AG04449 (cell line): ENCODE measurements at regions of chr18 and their contacts with region 1.

Region 1: GRCh38 chr18:48445540-48445939 is 36.4 kb upstream of the ZBTB7C start:
- DNase-seq: no peak
- H3K4me3 ChIP-seq: no peak overlapping the region
- CTCF ChIP-seq: peak; percentile 95

Region 2: DNA sequence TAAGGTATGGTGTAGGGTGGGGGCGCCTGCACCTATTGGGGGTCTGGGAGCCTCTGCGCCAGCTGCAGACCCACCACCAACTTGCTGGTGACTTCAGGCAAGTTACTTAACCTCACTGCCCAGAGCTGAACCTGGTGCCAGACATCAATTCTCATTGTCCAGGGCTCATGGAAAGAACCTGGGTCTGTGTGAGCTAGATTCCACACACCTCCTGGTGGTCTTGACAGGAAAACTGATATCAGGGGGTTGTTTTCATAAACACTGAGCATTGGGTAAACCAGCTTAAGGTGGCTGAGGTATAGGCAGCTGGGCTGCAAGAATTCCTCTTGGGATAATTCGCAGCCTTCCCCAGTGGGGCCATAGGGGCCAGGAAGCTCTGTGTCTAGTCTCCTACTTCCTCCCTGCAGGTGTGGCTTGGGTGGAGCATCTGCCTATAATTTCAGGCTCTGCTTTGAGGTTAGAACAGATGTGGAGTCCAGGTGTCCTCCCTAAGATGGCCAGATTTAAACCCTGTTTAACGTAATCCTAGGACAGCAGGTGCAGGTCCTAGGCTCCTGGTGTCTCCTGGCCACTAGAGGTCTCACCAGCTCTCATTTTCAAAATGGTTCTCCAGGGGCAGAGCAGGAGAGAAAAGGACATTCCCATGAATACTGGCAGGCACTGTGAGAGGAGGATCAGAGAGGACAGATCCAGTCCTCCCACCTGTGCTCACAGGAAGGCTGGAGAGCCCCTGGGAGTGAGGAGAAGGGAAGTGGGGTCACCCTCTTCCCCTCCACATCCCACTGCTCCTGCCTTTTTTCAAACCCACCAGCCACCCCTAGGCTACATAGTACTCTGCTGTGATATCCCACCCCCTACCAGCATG is 414.7 kb before region 1 on chr18:
- CTCF ChIA-PET with region 1: interaction called, 81 read pairs
- POLR2A ChIA-PET with region 1: no interaction called
- DNase-seq: no peak
- H3K4me3 ChIP-seq: no peak overlapping the region
- CTCF ChIP-seq: peak; percentile 74

Region 3: GRCh38 chr18:48230467-48231113 is 214.9 kb before region 1 on chr18:
- CTCF ChIA-PET with region 1: interaction called, 78 read pairs
- POLR2A ChIA-PET with region 1: no interaction called
- DNase-seq: no peak
- H3K4me3 ChIP-seq: no peak overlapping the region
- CTCF ChIP-seq: peak; percentile 60

Region 4: GRCh38 chr18:48419277-48420022 is 26.1 kb before region 1 on chr18:
- CTCF ChIA-PET with region 1: interaction called, 12 read pairs
- POLR2A ChIA-PET with region 1: no interaction called
- DNase-seq: no peak
- H3K4me3 ChIP-seq: no peak overlapping the region
- CTCF ChIP-seq: no peak

Region 5: DNA sequence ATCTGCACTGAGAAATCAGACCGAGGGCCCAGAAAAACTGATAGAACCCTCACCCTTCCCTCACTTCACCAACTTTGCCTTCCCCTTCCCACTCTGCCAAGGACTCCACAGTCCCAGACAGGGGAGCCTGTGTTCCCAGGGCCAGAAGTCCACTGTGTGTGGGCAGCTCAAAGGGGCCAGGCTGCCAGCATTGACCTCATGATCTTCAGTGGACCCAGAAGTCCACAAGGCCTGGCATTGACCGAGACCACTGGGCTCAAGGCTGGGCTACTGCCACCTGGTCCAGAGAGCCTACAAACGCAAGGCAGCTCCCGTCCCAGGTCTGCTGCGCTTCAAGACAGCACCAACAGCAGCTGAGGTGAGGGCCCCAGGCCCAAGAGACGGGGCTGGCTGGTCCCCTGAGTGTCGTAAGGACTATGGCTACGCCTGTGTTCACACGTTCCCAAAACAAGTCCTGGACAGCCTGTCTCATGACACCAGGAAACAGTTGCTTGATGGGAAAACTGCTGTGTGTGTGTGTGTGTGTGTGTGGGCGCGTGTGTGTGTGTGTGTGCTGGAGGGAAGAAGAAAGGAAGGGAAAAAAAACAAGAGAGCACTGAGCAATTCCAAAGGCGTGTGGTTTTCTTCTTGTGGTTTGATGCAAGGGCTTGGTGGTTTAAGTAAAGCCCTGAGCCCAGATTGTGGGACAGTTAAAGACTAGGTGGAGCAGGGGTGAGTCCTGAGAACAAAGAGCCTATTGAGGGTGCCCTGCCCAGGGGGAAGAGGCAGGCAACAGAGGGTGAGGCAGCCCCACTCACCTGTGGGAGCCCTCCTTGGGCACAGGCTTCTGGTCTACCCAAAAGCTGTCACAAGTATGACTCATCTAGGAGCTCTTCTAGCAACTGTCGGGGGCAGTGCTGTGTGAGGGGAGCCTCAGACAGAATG is 10.3 kb after region 1 on chr18:
- CTCF ChIA-PET with region 1: interaction called, 227 read pairs
- POLR2A ChIA-PET with region 1: interaction called, 3 read pairs
- DNase-seq: peak; percentile 85
- H3K4me3 ChIP-seq: no peak overlapping the region
- CTCF ChIP-seq: no peak